Head of caudate nucleus (tissue), 42 donors: ENCODE measurements at regions of chr1 and their contacts with region 1.

Region 1: DNA sequence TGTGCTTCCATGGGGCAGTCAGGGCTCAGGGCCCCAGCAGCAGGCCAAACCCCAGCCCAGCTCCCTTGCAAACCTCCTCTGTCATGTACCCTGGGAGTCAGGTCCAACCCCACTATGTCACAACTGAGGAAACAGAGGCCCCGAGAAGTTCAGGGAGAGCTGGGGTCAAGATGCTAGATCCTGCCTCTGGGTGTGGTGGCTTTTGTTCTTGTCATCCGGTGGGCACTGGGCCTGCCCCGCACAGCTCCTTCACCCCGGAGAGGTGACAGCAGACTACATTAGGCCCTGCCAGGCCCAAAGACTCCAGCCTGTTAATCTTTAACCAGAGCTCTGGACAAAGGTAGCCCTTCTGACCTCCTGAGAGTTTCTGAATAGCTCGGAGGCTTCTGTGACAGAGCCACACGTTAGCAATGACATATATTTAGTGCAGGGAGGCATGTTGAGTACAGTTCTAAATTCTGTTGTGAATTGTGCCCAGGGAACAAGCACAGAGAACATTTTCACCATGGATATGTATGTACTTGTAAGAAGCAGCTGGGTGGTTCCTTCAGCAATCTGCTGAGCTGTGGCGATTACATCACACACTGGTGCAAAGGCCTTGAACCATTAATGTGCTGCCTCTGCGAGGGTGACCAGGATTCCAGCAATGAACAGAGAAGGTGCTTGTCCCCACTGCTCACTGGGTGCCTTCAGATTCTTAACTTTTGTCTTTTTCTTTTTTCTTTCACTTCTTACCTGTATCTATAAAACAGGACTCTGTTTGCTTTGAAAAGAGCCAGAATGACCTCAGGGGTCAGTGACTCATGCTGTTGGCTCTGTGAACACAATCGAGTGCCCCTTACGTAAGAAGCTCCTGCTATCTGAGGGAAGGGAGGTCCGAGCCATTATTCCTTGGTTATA is 102.8 kb downstream of the RHOU start:
- DNase-seq: no peak

Region 2: GRCh38 chr1:228734881-228735801 is 102.9 kb before region 1 on chr1 and contains the start of gene RHOU:
- intact Hi-C with region 1: loop called (anchors 10 kb)
- DNase-seq: peak; percentile 40 to 93 (median 86)